A673 (cell line): ENCODE measurements at regions of chr9 and their contacts with region 1.

Region 1: GRCh38 chr9:19650312-19650711 is 138.5 kb downstream of the SLC24A2 start:
- DNase-seq: no peak
- H3K4me3 ChIP-seq: no peak overlapping the region
- H3K27ac ChIP-seq: no peak overlapping the region
- H3K4me1 ChIP-seq: no peaks in the 10 kb centered on the region
- H3K27me3 ChIP-seq: no peaks in the 10 kb centered on the region
- CTCF ChIP-seq: no peak

Region 2: DNA sequence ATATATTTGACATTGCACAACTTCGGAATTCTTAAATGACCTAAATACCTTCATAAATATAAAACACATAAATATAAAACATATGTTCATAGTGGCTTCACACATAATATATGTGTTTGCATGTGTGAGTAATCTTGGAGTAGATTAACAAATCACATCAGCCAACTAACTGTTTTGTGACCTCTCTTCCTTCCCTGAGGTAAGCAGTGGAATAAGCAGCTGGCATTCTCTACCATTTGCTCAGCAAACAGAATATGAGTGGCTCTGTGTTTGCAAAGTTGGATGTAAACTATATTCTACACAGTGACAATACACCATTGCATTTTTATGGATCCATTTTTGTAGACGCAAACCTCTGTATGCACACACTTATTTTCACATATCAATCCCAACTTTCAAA is 51.6 kb before region 1 on chr9:
- CTCF ChIA-PET with region 1: no interaction called
- POLR2A ChIA-PET with region 1: no interaction called
- intact Hi-C with region 1: loop called (anchors 10 kb)
- DNase-seq: no peak
- H3K4me3 ChIP-seq: no peak overlapping the region
- H3K27ac ChIP-seq: no peak overlapping the region
- H3K4me1 ChIP-seq: no peaks in the 10 kb centered on the region
- H3K27me3 ChIP-seq: no peaks in the 10 kb centered on the region
- CTCF ChIP-seq: no peak

Region 3: DNA sequence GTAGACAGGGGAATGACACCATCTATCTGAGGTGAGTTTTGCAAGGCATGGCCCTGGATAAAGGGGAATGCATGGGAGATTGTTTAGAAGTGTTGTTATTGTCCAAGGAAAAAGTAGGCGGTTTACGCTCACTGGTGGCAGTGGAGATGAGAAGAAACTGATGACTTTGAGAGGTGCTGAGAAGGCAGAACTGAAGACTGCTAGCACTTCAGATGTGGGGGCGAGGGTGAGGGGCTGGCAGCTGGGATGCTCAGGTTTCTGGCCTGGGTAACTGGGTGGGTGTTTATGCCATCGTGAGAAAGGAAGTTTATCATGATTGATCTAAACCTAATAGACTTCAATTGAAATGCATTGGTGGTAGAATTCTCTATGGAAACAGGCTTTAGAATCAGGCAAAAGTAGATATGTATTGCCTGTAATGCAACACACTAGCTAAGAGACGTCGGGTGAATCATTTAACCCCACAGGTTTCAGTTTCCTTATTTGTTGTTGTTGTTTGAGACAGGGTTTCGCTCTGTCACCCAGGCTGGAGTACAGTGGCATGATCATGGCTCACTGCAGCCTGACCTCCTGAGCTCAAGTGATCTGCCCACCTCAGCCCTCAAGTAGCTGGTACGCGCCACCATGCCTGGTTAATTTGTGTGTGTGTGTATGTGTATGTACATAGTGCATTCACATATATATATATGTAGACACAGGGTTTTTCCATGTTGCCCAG is 15.0 kb after region 1 on chr9:
- CTCF ChIA-PET with region 1: no interaction called
- POLR2A ChIA-PET with region 1: no interaction called
- intact Hi-C with region 1: no loop called
- DNase-seq: no peak
- H3K4me3 ChIP-seq: no peak overlapping the region
- H3K27ac ChIP-seq: no peak overlapping the region
- H3K4me1 ChIP-seq: no peaks in the 10 kb centered on the region
- H3K27me3 ChIP-seq: no peaks in the 10 kb centered on the region
- CTCF ChIP-seq: no peak